Vagina (tissue), 2 donors: ENCODE measurements at regions of chr2 and their contacts with region 1.

Region 1: DNA sequence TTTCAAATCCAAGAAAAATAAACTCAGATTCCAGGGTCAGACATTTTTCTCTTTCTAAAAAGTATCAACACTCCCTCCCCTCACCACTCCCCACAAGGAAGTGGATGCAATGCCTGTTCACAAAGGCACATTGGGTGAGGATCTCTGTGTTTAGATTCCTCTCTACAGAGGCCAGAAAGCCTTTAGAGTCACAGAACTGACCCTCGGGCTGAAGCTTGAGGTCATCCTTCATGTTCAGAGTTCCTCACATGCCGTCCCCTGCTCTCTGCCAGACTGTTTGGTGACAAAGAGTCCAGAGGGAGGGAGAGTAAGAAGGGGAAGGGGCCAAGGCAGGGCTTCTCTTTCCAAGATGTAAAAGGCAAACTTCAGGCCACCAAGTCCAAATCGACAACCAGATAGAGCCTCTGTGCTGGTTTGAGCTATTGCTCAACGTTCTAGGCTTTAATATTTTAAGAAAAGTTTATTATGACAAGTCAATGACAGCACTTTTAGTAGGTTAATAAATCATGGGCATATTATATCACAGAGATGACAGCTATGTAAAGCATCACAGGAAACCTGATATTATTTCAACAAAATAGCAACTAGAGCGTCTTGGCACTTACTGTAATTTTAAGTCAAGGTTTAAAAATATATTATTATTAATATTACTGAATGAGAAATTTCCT is 269.4 kb downstream of the ETAA1 start:
- DNase-seq: no peak
- H3K4me3 ChIP-seq: no peak overlapping the region
- H3K27ac ChIP-seq: no peak overlapping the region
- H3K4me1 ChIP-seq: peaks cover 7% of the 10 kb centered on the region
- H3K27me3 ChIP-seq: no peaks in the 10 kb centered on the region
- CTCF ChIP-seq: no peak
- POLR2A ChIP-seq: no peak

Region 2: GRCh38 chr2:67156796-67157195 is 509.7 kb before region 1 on chr2:
- intact Hi-C with region 1: no loop called
- DNase-seq: no peak
- H3K4me3 ChIP-seq: no peak overlapping the region
- H3K27ac ChIP-seq: no peak overlapping the region
- H3K4me1 ChIP-seq: peaks cover 7% of the 10 kb centered on the region
- H3K27me3 ChIP-seq: no peaks in the 10 kb centered on the region
- CTCF ChIP-seq: no peak
- POLR2A ChIP-seq: no peak

Region 3: DNA sequence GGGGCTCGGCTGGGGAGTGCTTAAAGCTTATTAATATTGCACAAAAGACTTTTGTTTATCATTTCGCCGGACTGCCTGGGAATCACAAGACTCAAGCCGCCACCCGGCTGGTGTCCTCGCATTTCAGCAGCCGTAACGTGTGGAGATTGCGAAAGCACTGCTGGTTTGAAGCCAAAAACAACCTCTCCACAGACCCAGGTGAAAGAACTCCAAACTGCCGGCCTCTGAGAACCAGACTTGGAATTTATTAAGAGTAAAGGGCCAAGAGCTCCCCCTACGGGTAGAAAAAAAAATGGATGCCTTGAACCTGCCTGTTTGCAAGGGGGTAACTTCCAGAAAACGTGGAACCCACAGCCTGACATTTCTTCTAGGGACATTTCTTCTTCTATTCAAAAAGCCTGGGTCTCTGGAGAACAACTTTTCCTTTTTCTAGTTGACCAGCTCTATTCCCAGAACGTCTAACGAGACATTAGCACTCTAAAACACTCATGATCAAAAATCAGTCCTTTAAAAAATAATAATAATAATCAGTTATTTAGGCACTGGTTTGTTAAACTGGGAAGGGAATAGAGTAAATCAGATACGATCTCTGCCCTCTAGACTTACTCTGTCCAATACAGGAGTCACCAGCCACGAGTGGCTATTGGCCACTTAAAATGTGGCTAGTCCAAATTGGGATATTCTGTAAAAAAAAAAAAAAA is 180.0 kb after region 1 on chr2:
- intact Hi-C with region 1: loop called (anchors 5 kb)
- DNase-seq: peak in 1 of 2 donors; percentile 96
- H3K4me3 ChIP-seq: no peak overlapping the region
- H3K27ac ChIP-seq: peak overlapping the region; percentile 42
- H3K4me1 ChIP-seq: peaks cover 5% of the 10 kb centered on the region
- H3K27me3 ChIP-seq: no peaks in the 10 kb centered on the region
- CTCF ChIP-seq: peak; percentile 65 to 81 (median 73)
- POLR2A ChIP-seq: no peak

Region 4: GRCh38 chr2:68686178-68686577 is 1019.7 kb after region 1 on chr2:
- intact Hi-C with region 1: no loop called
- DNase-seq: no peak
- H3K4me3 ChIP-seq: no peak overlapping the region
- H3K27ac ChIP-seq: no peak overlapping the region
- H3K4me1 ChIP-seq: no peaks in the 10 kb centered on the region
- H3K27me3 ChIP-seq: no peaks in the 10 kb centered on the region
- CTCF ChIP-seq: no peak
- POLR2A ChIP-seq: no peak

Region 5: DNA sequence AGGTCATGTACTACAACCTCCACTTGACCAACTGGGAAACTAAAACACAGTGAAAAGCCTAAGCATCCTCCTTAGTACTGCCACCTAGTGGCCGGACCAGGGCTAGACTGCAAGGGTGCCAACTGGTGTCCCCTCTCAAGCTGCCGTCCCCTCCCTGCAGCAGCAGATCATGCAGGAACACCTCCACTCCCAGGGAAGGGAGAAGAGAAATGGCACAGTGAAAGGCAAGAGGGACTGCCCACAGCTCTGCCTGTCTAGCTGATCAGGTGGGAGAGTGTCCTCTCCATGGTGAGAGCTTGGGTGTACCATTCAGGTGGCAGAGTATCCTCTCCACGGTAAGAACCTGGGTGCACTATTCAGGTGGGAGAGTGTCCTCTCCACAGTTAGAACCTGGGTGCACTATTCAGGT is 1898.9 kb after region 1 on chr2:
- intact Hi-C with region 1: no loop called
- DNase-seq: no peak
- H3K4me3 ChIP-seq: no peak overlapping the region
- H3K27ac ChIP-seq: no peak overlapping the region
- H3K4me1 ChIP-seq: peaks cover 32% of the 10 kb centered on the region
- H3K27me3 ChIP-seq: no peaks in the 10 kb centered on the region
- CTCF ChIP-seq: peak in 2 of 3 experiments; percentile 33 to 36
- POLR2A ChIP-seq: no peak